ENCODE measurements at regions of chr20 and their contacts with region 1.

Region 1: GRCh38 chr20:25277051-25277801 is 29.3 kb downstream of the PYGB start:
- DNase-seq: no peak
- H3K4me3 Mint-ChIP-seq: no peak overlapping the region
- H3K27ac Mint-ChIP-seq: no peak overlapping the region
- H3K4me1 Mint-ChIP-seq: peaks cover 6% of the 10 kb centered on the region
- H3K27me3 Mint-ChIP-seq: no peaks in the 10 kb centered on the region
- CTCF ChIP-seq: no peak

Region 2: DNA sequence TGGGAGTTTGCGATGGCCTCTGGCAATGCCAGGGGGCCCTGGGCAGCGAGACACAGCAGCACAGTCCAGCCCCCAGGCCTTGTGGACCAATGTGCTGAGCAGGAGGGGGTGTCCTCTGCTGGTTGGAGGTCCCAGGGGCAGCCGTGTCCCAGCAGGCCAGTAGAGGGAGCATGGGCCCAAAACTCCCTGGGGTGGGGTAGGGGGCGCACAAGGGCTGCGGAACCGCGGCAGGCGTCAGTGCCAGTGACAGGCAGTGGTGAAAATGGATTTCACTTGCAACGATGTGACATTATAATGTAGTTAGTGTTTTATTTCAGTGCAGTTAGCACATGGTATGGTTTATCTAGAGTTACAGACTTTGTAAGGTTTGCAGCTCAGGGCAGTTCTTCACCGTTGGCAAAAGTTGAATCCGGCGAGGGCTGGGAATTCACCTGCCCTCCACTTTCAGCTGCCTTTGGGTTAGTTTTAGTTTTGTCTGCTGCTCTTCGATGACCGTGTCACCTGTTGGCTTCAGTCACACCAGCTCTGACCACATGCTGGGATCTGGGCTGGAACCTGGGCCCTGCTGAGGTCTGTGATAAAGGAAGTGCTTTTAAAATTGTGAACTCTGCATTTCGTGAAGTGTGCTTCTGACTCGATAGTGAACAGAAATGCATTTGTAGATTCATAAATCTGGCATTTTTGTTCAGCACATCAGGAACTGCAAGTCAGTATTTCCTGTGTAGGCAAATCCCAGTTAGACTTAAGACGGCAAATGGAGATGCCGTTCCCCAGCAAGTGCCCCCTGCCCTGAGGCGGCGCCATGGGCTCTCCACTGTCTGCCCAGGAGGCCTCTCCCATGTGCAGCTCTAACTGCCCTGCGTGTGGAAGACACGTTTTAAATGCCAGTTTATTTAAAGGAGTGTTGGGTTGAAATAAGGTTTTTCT is 17.5 kb after region 1 on chr20:
- CTCF ChIA-PET with region 1: interaction called, 12 read pairs
- POLR2A ChIA-PET with region 1: interaction called, 7 read pairs
- intact Hi-C with region 1: no loop called
- DNase-seq: peak; percentile 28
- H3K4me3 Mint-ChIP-seq: no peak overlapping the region
- H3K27ac Mint-ChIP-seq: peak overlapping the region; percentile 75
- H3K4me1 Mint-ChIP-seq: peaks cover 9% of the 10 kb centered on the region
- H3K27me3 Mint-ChIP-seq: no peaks in the 10 kb centered on the region
- CTCF ChIP-seq: peak; percentile 49